Dorsolateral prefrontal cortex (tissue), 120 donors: ENCODE measurements at regions of chr20 and their contacts with region 1.

Region 1: GRCh38 chr20:41411391-41411847 is 44.8 kb upstream of the EMILIN3 start:
- DNase-seq: no peak
- H3K4me3 ChIP-seq: no peak overlapping the region
- H3K27ac ChIP-seq: peak overlapping the region in 12 of 59 donors; percentile 1 to 60 (median 24)
- H3K27me3 ChIP-seq: no peaks in the 10 kb centered on the region
- CTCF ChIP-seq: peak; percentile 42 to 75 (median 61)

Region 2: GRCh38 chr20:40970201-40970600 is 441.2 kb before region 1 on chr20:
- intact Hi-C with region 1: loop called in 1 of 2 experiments (anchors 5 kb)
- DNase-seq: no peak
- H3K4me3 ChIP-seq: no peak overlapping the region
- H3K27ac ChIP-seq: no peak overlapping the region
- H3K27me3 ChIP-seq: no peaks in the 10 kb centered on the region
- CTCF ChIP-seq: no peak

Region 3: GRCh38 chr20:41136680-41137613 is 274.5 kb before region 1 on chr20 and contains the start of gene PLCG1:
- intact Hi-C with region 1: loop called in 1 of 2 experiments (anchors 10 kb)
- DNase-seq: peak; percentile 88 to 95 (median 93)
- H3K4me3 ChIP-seq: peak within 1 kb of the TSS; percentile 65 to 99 (median 89)
- H3K27ac ChIP-seq: peak within 1 kb of the TSS; percentile 66 to 99 (median 96)
- H3K27me3 ChIP-seq: no peaks in the 10 kb centered on the region
- CTCF ChIP-seq: peak in 16 of 56 donors; percentile 8 to 38 (median 20)
- total RNA-seq, gene PLCG1: 110 to 346 (median 179) TPM

Region 4: GRCh38 chr20:41249406-41250281 is 161.8 kb before region 1 on chr20:
- intact Hi-C with region 1: loop called in 1 of 2 experiments (anchors 10 kb)
- DNase-seq: peak in 9 of 10 donors; percentile 53 to 86 (median 72)
- H3K4me3 ChIP-seq: peak overlapping the region in 4 of 59 donors; percentile 8 to 14 (median 13)
- H3K27ac ChIP-seq: peak overlapping the region; percentile 80 to 99 (median 95)
- H3K27me3 ChIP-seq: no peaks in the 10 kb centered on the region
- CTCF ChIP-seq: peak in 51 of 56 donors; percentile 23 to 74 (median 50)

Region 5: GRCh38 chr20:41347523-41348429 is 63.6 kb before region 1 on chr20:
- intact Hi-C with region 1: loop called in 1 of 2 experiments (anchors 5 kb)
- DNase-seq: peak in 2 of 10 donors; percentile 52 to 58
- H3K4me3 ChIP-seq: no peak overlapping the region
- H3K27ac ChIP-seq: peak overlapping the region in 1 of 59 donors; percentile 11
- H3K27me3 ChIP-seq: no peaks in the 10 kb centered on the region
- CTCF ChIP-seq: no peak

Region 6: DNA sequence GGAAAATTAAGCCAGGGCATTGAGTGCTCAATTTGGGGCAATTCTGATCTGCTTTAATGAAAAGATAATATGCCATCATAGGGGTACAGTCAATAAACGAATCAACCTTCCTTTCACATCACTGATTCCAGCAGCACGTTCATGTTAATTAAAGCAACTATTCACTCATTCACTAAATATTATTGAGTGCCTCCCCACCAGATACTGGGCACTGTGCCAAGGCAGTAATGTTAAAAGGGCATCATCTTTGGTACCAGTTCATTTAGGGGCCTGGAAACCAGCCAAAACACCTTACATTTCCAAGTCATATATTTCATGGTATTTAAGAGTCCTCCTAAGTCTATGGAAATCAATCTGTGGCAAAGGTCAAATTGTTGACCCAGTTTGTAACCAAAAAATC is 76.5 kb after region 1 on chr20:
- intact Hi-C with region 1: no loop called
- DNase-seq: no peak
- H3K4me3 ChIP-seq: no peak overlapping the region
- H3K27ac ChIP-seq: no peak overlapping the region
- H3K27me3 ChIP-seq: no peaks in the 10 kb centered on the region
- CTCF ChIP-seq: no peak